ENCODE measurements at regions of chr6 and their contacts with region 1.

Region 1: DNA sequence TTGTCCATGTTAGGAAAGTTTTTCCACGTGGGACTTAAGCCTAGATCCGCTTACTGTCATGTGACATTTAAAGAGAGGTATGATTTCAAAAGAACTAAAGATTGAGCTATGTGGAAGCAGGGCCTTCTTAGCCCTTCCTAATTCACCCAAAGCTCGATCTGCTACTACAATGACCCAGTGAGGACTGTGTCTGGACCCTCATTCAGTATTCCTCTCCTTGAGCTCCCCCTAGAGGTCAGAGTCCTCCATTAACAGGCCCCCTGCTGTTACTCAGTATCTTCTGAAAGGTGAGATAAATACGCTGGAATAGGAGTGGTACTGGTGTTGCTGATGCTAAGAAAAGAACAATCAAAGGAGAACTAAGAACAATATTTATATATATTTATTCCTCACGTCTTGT is 414.0 kb downstream of the GJA1 start:
- DNase-seq: no peak
- H3K4me3 ChIP-seq: no peak overlapping the region
- H3K27me3 ChIP-seq: no peaks in the 10 kb centered on the region
- CTCF ChIP-seq: peak; percentile 73

Region 2: DNA sequence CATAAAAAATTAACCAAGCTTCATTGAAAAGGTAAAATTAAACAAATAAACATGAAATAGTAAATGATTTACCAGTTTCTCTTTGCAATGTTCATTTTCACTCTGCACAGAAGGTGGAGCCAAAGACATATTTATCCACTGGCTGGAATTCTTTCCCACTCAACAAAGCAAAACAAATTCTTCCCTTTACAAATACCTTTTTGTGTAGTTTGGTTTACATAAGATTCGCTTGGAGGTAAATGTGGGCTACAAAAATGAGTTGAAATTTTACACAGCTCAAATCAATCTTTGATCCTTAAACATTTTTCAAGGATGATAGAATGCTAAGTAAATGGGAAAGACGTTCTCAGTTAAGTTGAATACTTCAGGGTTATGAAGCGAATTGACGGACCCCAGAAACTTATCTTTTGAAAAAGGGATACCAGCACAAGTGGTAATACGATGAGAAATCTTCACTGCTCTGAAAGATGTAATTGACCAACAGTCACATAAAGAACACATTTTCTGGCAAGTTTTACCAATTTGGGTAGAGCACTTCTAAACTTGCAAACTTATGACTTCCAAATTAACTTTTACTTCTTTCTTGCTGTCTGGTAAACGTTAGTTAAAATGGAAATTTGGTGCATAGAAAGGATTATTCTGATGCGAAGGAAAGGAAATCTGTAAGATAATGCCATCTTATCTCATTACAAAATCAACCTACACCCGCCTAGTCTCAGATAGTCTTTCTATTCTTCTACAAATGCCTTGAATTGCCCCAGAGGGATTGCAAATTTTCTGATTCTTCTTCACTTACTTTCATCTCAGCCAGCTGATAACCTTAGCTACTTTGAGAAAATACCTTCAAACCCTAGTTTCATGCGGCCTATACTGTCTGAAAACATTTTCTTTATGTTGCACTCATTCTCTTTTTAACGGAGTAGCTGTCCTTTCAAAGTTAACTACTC is 418.7 kb before region 1 on chr6:
- CTCF ChIA-PET with region 1: interaction called, 26 read pairs
- POLR2A ChIA-PET with region 1: no interaction called
- DNase-seq: no peak
- H3K4me3 ChIP-seq: no peak overlapping the region
- H3K27me3 ChIP-seq: no peaks in the 10 kb centered on the region
- CTCF ChIP-seq: peak; percentile 59

Region 3: GRCh38 chr6:121436960-121437850 is 412.3 kb before region 1 on chr6:
- CTCF ChIA-PET with region 1: interaction called, 26 read pairs
- POLR2A ChIA-PET with region 1: no interaction called
- DNase-seq: no peak
- H3K4me3 ChIP-seq: peak overlapping the region; percentile 85
- H3K27me3 ChIP-seq: no peaks in the 10 kb centered on the region
- CTCF ChIP-seq: no peak

Region 4: DNA sequence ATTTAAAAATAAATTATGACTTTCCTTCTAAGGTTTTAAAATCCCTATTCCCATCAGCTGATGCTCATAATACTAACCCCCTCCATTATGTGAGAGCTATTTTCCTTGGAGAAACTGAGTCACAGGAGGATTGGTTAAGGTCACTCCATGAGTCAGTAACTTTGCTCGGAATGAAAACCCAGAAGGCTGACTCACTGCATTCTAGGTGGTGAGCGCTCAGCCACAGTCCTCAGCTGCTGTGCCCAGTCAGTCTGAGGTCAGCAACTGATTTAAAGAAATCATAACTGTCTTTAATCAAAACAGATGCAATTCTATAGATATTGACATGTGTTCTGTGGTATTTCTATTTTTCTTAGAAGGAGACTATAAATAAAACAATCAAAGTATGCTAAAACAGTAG is 54.8 kb before region 1 on chr6:
- CTCF ChIA-PET with region 1: no interaction called
- POLR2A ChIA-PET with region 1: no interaction called
- DNase-seq: peak; percentile 72
- H3K4me3 ChIP-seq: no peak overlapping the region
- H3K27me3 ChIP-seq: no peaks in the 10 kb centered on the region
- CTCF ChIP-seq: no peak

Region 5: GRCh38 chr6:121951918-121952379 is 102.5 kb after region 1 on chr6:
- CTCF ChIA-PET with region 1: no interaction called
- POLR2A ChIA-PET with region 1: interaction called, 10 read pairs
- DNase-seq: no peak
- H3K4me3 ChIP-seq: no peak overlapping the region
- H3K27me3 ChIP-seq: no peaks in the 10 kb centered on the region
- CTCF ChIP-seq: no peak

Measured in BJ (cell line).